PC-9 (cell line): ENCODE measurements at regions of chr4 and their contacts with region 1.

Region 1: GRCh38 chr4:2852481-2852921 is 8.9 kb downstream of the ADD1 start:
- DNase-seq: peak in 1 of 2 experiments; percentile 33
- H3K4me3 ChIP-seq: no peak overlapping the region
- H3K27ac ChIP-seq: no peak overlapping the region
- H3K4me1 ChIP-seq: no peaks in the 10 kb centered on the region
- H3K27me3 ChIP-seq: no peaks in the 10 kb centered on the region
- CTCF ChIP-seq: no peak

Region 2: DNA sequence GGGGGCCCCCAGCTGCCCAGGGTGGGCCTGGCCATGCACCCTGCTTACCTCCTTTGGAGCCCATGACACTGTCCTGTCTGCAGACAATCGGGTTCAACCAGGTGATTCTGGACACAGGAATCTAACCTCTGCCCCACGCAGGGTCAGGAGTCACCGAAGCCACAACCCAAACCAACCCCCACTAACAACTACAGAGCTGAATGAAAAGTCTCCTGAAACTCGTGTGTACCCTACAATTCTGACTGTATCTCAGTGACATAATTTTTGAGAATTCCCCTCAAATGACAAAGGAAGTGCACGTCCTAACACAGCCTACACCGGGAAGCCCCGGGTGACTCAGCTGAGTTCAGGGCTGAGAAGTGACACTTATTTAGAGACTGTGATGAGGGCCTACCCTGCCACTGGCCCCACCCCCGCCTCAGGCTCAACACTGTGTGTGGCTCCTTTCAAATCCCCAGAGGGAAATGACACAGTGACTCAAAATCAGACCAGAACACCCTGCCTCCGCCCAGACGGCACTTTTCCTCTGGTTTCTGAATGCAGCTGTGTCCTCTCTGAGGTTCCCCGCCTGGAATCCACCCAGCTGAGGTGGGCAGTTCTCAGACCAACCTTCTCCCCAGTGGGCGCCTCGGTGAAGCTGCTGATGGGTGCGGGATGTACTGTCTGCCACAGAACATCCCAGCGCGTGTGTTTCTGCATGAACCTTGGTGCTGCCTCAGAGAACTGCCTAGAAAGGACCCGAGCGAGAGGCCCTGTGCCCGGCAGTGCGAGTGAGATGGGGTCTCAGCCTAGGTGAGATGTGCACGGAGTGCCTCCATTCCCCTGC is 106.3 kb before region 1 on chr4:
- CTCF ChIA-PET with region 1: no interaction called
- POLR2A ChIA-PET with region 1: no interaction called
- intact Hi-C with region 1: no loop called
- DNase-seq: peak; percentile 80 to 86
- H3K4me3 ChIP-seq: no peak overlapping the region
- H3K27ac ChIP-seq: peak overlapping the region; percentile 58
- H3K4me1 ChIP-seq: peaks cover 15% of the 10 kb centered on the region
- H3K27me3 ChIP-seq: no peaks in the 10 kb centered on the region
- CTCF ChIP-seq: no peak

Region 3: DNA sequence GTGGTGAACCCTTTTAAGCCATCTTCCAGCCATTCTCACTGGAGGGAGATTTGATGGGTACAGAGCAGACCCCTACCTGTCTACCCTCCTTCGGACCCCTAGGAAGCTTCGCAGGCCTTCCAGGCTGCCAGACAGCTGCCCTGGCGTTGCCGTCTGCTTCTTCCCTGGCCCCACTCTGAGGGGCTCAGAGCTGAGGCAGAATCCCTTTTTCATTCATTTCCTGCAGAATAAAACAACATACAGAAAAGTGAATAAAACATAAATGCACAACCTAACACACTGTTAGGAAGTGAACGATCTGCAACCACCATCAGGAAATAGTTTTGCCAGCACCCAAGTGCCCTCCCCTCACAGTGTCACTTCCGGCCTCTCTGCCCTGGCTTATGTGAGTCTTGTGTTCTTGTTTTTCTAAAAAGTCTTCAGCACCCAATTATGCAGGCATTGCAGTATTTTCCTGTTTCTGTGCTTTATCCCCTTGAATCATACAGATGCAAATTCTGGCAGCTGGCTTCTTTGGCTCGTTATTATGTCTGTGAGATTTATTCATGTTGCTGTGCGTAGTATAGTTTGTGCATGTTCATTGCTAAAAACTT is 14.5 kb before region 1 on chr4:
- CTCF ChIA-PET with region 1: no interaction called
- POLR2A ChIA-PET with region 1: interaction called, 21 read pairs
- intact Hi-C with region 1: no loop called
- DNase-seq: no peak
- H3K4me3 ChIP-seq: no peak overlapping the region
- H3K27ac ChIP-seq: no peak overlapping the region
- H3K4me1 ChIP-seq: no peaks in the 10 kb centered on the region
- H3K27me3 ChIP-seq: no peaks in the 10 kb centered on the region
- CTCF ChIP-seq: no peak